ENCODE measurements at regions of chr10 and their contacts with region 1.

Region 1: GRCh38 chr10:49407552-49408137 is 11.8 kb upstream of the DRGX start:
- DNase-seq: peak; percentile 86
- H3K4me3 ChIP-seq: no peak overlapping the region
- H3K27ac ChIP-seq: no peak overlapping the region
- H3K4me1 ChIP-seq: no peaks in the 10 kb centered on the region
- H3K27me3 ChIP-seq: peaks cover 84% of the 10 kb centered on the region

Region 2: GRCh38 chr10:49518982-49519578 is 111.4 kb after region 1 on chr10:
- in situ Hi-C with region 1: loop called (anchors 10 kb)
- DNase-seq: peak; percentile 75
- H3K4me3 ChIP-seq: no peak overlapping the region
- H3K27ac ChIP-seq: no peak overlapping the region
- H3K4me1 ChIP-seq: peaks cover 32% of the 10 kb centered on the region
- H3K27me3 ChIP-seq: no peaks in the 10 kb centered on the region

Region 3: DNA sequence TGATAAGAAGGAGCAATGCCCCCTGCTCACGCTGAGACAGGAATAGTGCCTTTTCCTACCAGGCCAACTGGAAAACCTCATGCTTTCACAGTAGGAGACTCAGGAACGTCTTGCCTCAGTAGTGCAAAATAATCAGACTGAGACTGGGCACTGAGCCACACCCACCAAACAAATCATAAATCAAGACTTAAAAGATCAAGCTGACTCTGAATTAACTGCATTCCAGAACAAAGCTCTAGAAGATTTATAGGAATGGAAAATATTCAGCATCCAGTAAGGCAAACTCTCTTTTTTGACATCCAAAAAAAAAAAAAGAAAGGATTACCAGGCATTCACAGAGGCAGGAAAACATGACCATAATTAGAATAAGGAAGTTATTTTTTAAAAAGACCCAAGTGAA is 172.0 kb after region 1 on chr10:
- in situ Hi-C with region 1: no loop called
- DNase-seq: no peak
- H3K4me3 ChIP-seq: no peak overlapping the region
- H3K27ac ChIP-seq: no peak overlapping the region
- H3K4me1 ChIP-seq: peaks cover 19% of the 10 kb centered on the region
- H3K27me3 ChIP-seq: no peaks in the 10 kb centered on the region